ENCODE measurements at regions of chr17 and their contacts with region 1.

Region 1: DNA sequence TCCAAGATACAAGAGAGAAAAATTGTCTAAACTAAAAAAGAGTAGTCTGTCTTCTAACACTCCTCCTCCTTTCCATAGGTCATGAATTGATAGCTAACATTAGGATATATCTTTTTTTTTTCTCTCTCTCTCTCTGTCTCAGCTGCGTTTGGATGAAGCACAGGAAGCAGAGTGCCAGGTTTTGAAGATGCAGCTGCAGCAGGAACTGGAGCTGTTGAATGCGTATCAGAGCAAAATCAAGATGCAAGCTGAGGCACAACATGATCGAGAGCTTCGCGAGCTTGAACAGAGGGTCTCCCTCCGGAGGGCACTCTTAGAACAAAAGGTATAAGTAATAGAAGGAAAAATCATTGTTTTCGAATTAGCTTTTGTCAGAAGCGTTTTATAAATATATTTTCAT is 32.9 kb downstream of the ABHD15 start:
- DNase-seq: no peak
- H3K4me3 Mint-ChIP-seq: no peak overlapping the region
- H3K27ac Mint-ChIP-seq: no peak overlapping the region
- H3K4me1 Mint-ChIP-seq: no peaks in the 10 kb centered on the region
- H3K27me3 Mint-ChIP-seq: no peaks in the 10 kb centered on the region
- CTCF ChIP-seq: no peak

Region 2: GRCh38 chr17:29369831-29370735 is 163.9 kb before region 1 on chr17:
- CTCF ChIA-PET with region 1: interaction called, 31 read pairs
- intact Hi-C with region 1: loop called (anchors 1 kb)
- DNase-seq: peak; percentile 55
- H3K4me3 Mint-ChIP-seq: no peak overlapping the region
- H3K27ac Mint-ChIP-seq: no peak overlapping the region
- H3K4me1 Mint-ChIP-seq: peaks cover 6% of the 10 kb centered on the region
- H3K27me3 Mint-ChIP-seq: no peaks in the 10 kb centered on the region
- CTCF ChIP-seq: peak; percentile 58

Region 3: GRCh38 chr17:29483503-29483902 is 50.5 kb before region 1 on chr17:
- CTCF ChIA-PET with region 1: no interaction called
- intact Hi-C with region 1: loop called (anchors 10 kb)
- DNase-seq: no peak
- H3K4me3 Mint-ChIP-seq: no peak overlapping the region
- H3K27ac Mint-ChIP-seq: no peak overlapping the region
- H3K4me1 Mint-ChIP-seq: no peaks in the 10 kb centered on the region
- H3K27me3 Mint-ChIP-seq: no peaks in the 10 kb centered on the region
- CTCF ChIP-seq: no peak

Measured in Calu3 (cell line).